GM10248 (cell line): ENCODE measurements at regions of chr14 and their contacts with region 1.

Region 1: DNA sequence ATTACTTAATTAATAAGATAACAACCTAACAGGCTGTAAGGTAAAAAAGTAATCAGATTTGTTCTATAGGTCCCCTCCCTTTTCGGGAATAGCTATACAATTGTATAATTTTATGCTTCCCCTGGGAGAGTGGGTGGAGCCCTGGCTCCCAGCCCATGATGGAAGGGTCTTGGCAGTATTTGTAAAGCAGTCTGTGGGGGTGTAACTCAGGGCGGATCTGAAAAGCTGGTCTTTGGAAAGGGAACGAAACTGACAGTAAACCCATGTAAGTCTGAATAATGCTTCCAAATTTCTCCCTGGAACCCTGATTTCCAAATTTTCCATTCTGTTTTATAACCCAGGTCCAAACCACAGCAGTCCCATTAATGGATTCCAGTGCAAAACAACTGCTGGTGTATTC is 110.4 kb downstream of the DAD1 start:
- DNase-seq: no peak
- CTCF ChIP-seq: no peak

Region 2: DNA sequence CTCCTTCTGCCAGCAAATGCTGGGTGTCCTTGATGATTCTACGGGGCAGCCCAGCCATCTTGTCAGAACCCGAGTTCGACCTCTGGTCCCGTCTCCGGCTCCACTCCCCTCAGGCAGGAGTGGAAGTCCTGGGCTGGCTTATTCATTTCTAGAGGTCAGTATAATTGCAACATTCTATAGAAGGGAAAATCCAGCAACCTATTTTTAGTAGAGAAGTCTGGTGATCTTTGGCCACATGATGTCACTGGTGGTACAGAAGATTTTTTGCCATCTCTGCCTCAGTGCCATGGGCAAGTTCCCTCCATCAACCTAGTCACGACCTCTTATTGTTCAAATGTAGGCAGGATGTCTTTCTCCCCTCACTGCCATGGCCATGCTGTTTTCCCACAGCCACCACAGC is 866.3 kb before region 1 on chr14:
- CTCF ChIA-PET with region 1: no interaction called
- POLR2A ChIA-PET with region 1: no interaction called
- DNase-seq: peak; percentile 22
- CTCF ChIP-seq: no peak

Region 3: DNA sequence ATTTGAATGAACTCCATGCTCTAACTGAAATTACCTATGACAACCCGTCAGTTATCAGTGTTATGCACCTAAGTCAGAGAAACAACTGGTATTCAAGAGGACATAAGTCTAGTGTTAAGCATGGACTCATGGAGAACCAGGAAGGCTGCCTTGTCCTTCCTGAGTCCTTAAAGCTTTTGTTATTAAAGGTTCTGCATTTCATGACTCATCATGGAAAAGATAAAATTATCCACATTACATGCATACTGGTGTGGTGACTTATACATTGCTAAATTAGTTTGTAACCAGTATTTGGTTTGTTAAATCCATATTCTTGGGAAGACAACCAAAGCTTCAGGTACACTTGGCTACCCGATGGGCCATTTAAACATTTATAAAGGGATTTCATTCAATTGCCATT is 798.6 kb before region 1 on chr14:
- CTCF ChIA-PET with region 1: no interaction called
- POLR2A ChIA-PET with region 1: no interaction called
- DNase-seq: no peak
- CTCF ChIP-seq: no peak

Region 4: DNA sequence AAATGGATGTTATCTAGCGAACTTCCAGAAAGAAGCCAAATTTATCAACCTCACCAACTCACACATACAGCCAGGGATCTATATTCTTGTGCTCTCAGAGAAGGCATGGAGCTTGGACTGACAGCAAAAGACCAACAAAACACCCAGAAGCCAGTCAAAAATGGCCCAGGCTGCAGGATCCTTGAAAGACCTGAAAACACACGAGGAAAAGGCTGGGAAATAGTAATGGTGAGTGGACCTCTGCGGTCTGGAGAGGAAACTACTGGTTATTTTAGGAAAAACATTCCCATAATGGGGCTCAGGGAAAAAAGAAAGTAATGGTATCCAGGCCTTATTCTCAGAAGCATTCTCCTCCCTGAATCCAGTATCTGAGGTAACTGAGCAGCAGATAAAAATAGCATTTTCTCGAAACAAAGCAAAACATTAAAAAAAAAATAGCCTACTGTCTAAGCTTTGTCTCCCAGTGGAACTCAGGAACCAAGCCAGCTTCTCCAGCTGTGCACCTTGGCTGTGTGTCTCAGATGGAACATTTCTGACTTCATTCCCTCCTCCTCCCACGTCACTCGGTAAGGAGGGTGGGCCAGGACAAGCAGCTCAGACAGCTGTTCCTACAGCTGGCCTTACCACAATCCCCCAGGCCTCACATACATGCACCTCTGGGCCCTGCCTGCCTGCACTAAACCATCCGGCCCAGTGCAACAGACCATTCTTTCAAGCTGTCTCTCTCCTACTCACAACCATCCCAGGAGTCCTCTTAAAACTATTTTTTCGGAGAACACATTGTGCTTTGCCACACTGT is 139.6 kb before region 1 on chr14:
- CTCF ChIA-PET with region 1: no interaction called
- POLR2A ChIA-PET with region 1: no interaction called
- DNase-seq: no peak
- CTCF ChIP-seq: no peak

Region 5: DNA sequence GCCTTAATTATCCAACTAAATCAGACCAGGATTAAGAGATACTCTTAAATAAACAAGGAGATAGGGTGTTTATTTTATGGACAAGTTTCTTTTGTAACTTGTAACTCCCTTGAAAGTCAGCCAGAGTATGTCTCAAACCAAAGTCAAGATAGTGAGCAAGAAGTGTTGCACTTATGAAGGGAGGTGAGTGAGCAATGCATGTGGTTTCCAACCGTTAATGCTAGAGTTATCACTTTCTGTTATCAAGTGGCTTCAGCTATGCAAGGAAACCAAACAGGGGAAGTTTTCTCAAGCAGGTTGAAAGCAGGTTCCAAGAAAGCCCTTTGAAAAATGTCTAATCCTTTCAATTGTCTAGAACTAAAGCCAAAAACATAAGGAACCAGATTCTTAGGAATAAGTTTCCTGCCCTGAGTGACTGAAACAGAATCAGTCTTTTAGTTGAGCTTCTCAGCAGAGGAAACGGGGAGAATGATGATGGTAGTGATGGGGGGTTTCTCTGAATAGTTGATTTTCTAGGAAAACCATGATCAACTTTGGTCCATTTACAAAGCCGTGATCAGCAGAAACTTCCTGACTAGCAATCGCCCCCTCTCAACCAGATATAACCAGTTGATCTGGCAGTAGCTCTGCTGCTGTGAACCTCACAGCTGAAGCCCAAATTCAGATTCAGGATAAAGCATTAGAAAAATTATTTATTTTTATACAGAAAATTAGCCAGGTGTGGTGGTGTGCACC is 18.0 kb before region 1 on chr14:
- CTCF ChIA-PET with region 1: interaction called, 44 read pairs
- POLR2A ChIA-PET with region 1: no interaction called
- DNase-seq: peak; percentile 37
- CTCF ChIP-seq: no peak

Region 6: GRCh38 chr14:22491683-22492621 is 13.3 kb after region 1 on chr14:
- CTCF ChIA-PET with region 1: interaction called, 86 read pairs
- POLR2A ChIA-PET with region 1: no interaction called
- DNase-seq: peak; percentile 39
- CTCF ChIP-seq: no peak